Calu3 (cell line): ENCODE measurements at regions of chr2 and their contacts with region 1.

Region 1: GRCh38 chr2:230160112-230160660 is 59.6 kb downstream of the SP110 start:
- DNase-seq: peak; percentile 54
- H3K4me3 Mint-ChIP-seq: no peak overlapping the region
- H3K27ac Mint-ChIP-seq: no peak overlapping the region
- H3K4me1 Mint-ChIP-seq: no peaks in the 10 kb centered on the region
- H3K27me3 Mint-ChIP-seq: no peaks in the 10 kb centered on the region
- CTCF ChIP-seq: peak; percentile 77

Region 2: DNA sequence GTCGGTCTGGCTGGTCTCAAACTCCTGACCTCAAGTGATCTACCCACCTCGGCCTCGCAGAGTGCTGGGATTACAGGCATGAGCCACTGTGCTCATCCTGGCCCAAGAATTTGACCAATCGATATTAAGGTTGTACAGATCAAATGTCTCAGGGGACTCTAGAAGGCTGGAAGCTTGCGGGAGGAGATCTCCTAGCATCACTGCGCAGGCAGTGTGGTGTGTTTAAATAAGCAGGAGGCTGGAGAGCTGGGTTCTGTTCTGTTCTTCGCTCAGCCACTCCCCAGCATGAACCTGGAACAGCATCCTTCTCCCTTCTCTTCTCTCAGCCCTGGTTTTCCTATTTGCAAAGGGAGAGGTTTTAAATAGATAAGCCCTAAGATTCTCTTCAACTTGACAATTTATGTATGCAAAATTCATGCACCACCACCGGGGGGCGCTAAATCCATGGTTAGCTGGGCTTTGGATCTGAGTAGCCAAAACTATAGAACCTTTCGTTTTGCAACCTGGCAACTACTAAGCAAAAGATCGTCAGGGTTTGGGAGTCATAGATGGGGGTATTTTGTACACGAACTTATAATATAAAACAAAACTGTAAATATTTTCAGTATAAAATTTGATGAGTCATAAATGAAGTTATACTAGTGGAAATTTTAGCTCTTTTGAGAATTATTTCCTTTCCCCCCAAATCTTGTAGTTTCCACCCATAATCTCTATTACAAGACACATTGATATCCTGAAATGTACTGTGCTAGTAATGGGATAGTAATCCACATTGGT is 152.1 kb before region 1 on chr2:
- CTCF ChIA-PET with region 1: interaction called, 11 read pairs
- intact Hi-C with region 1: loop called (anchors 1 kb)
- DNase-seq: peak; percentile 85
- H3K4me3 Mint-ChIP-seq: no peak overlapping the region
- H3K27ac Mint-ChIP-seq: no peak overlapping the region
- H3K4me1 Mint-ChIP-seq: peaks cover 18% of the 10 kb centered on the region
- H3K27me3 Mint-ChIP-seq: no peaks in the 10 kb centered on the region
- CTCF ChIP-seq: peak; percentile 86

Region 3: GRCh38 chr2:230219419-230220331 is 59.5 kb after region 1 on chr2 and contains the start of gene SP110:
- CTCF ChIA-PET with region 1: no interaction called
- intact Hi-C with region 1: no loop called
- DNase-seq: peak; percentile 86
- H3K4me3 Mint-ChIP-seq: peak within 1 kb of the TSS; percentile 92
- H3K27ac Mint-ChIP-seq: peak within 1 kb of the TSS; percentile 92
- H3K4me1 Mint-ChIP-seq: peaks cover 36% of the 10 kb centered on the region
- H3K27me3 Mint-ChIP-seq: no peaks in the 10 kb centered on the region
- CTCF ChIP-seq: no peak
- total RNA-seq, gene SP110: 56.7 and 107 TPM in 2 replicates

Region 4: DNA sequence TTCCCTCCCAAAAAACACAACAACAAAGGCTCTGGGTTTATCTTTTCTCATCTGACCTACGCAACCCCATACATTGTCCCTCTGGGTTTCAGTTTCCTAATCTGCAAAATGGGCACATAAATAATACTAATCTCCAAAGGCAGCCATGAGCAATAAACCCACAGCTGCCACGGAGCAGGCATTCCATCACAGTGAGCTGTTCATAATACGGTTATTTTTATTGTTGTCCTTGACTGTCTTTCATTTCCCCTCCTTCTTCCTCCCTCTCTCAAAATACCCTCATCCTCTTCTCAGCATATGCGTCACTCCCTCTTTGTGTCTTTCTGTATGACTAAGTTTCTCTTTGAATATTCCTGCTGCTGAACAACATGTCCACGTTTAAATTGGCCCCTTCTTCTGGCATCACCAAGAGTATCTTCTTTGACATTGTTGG is 422.7 kb after region 1 on chr2:
- CTCF ChIA-PET with region 1: no interaction called
- intact Hi-C with region 1: no loop called
- DNase-seq: no peak
- H3K4me3 Mint-ChIP-seq: no peak overlapping the region
- H3K27ac Mint-ChIP-seq: no peak overlapping the region
- H3K4me1 Mint-ChIP-seq: no peaks in the 10 kb centered on the region
- H3K27me3 Mint-ChIP-seq: no peaks in the 10 kb centered on the region
- CTCF ChIP-seq: no peak